Esophagus muscularis mucosa (tissue), 4 donors: ENCODE measurements at regions of chr11 and their contacts with region 1.

Region 1: GRCh38 chr11:76857781-76858410 is 2.8 kb upstream of the ACER3 start:
- DNase-seq: no peak
- H3K4me3 ChIP-seq: no peak overlapping the region
- H3K27ac ChIP-seq: no peak overlapping the region
- H3K4me1 ChIP-seq: peaks cover 12 to 26% (median 23%) of the 10 kb centered on the region in 4 donors
- H3K27me3 ChIP-seq: no peaks in the 10 kb centered on the region
- CTCF ChIP-seq: no peak
- EP300 ChIP-seq: no peak
- POLR2A ChIP-seq: no peak

Region 2: DNA sequence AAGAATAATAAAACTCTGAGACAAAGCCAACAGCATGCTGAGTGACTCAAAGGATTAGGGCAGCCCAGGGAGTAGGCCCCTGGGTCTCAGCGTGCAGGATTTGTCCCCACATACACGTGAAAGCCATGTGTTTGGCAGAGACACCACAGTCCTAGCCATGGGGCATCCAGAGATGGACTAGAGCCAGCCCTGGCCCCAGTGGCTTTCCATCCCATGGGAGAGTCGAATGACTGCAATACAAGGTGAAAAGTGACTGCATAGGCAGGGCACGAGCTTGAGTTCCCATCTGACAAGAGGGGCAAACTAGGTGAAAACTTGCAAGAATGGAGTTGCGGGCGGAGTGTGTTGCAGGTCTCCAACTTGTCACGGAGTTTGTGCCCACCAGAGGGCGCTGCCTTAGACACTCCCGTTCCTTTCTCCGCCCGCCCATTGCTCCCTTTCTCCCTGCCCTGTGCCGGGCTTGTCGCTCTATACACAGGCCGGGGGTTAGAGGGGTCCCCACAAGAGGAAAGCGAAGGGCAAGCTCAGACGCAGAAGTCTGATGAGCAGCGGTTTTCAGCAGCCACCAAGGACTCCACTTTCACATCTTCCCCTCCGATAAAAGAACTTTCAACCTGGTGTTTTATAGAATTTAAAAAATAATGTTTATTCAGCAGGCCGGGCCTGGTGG is 50.6 kb before region 1 on chr11:
- intact Hi-C with region 1: loop called (anchors 2 kb)
- DNase-seq: peak; percentile 95
- H3K4me3 ChIP-seq: peak overlapping the region in 3 of 4 donors; percentile 12 to 22 (median 18)
- H3K27ac ChIP-seq: no peak overlapping the region
- H3K4me1 ChIP-seq: peaks cover 14 to 22% (median 17%) of the 10 kb centered on the region in 4 donors
- H3K27me3 ChIP-seq: peaks cover 0 to 7% (median 0%) of the 10 kb centered on the region in 4 donors
- CTCF ChIP-seq: peak; percentile 70 to 80 (median 73)
- EP300 ChIP-seq: no peak
- POLR2A ChIP-seq: no peak

Region 3: GRCh38 chr11:76919887-76920746 is 62.2 kb after region 1 on chr11:
- intact Hi-C with region 1: no loop called
- DNase-seq: no peak
- H3K4me3 ChIP-seq: no peak overlapping the region
- H3K27ac ChIP-seq: no peak overlapping the region
- H3K4me1 ChIP-seq: peaks cover 12 to 15% (median 14%) of the 10 kb centered on the region in 4 donors
- H3K27me3 ChIP-seq: no peaks in the 10 kb centered on the region
- CTCF ChIP-seq: peak; percentile 71 to 88 (median 74)
- EP300 ChIP-seq: no peak
- POLR2A ChIP-seq: no peak